ENCODE measurements at regions of chr10 and their contacts with region 1.

Region 1: DNA sequence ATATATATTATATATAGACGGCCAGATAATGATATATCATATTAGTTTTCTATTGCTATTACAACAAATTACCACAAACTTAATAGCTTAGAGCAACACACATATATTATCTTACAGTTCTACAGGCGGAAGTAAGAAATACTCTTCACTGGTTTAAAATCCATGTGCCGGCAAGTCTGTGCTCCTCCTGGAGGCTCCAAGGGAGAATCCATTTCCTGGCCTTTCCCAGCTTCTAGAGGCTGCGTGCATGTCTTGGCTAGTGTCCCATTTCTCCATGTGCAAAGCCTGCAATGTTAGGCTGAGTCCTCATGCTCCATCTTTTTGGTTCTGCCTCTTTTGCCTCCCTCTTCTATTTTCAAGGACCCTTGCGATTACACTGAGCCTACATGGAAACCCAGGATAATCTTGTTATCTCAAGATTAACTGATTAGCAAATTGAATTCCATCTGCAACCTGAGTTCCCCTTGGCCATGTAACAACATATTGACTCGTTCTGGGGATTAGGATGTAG is 23.9 kb upstream of the PNLIPRP3 start:
- DNase-seq: no peak
- H3K4me3 ChIP-seq: no peak overlapping the region
- H3K27ac ChIP-seq: no peak overlapping the region
- H3K4me1 ChIP-seq: no peaks in the 10 kb centered on the region
- H3K27me3 ChIP-seq: no peaks in the 10 kb centered on the region
- CTCF ChIP-seq: no peak
- EP300 ChIP-seq: no peak
- POLR2A ChIP-seq: no peak

Region 2: GRCh38 chr10:116444527-116445142 is 40.8 kb after region 1 on chr10:
- in situ Hi-C with region 1: no loop called
- intact Hi-C with region 1: loop called (anchors 2 kb)
- DNase-seq: no peak
- H3K4me3 ChIP-seq: no peak overlapping the region
- H3K27ac ChIP-seq: no peak overlapping the region
- H3K4me1 ChIP-seq: no peaks in the 10 kb centered on the region
- H3K27me3 ChIP-seq: no peaks in the 10 kb centered on the region
- CTCF ChIP-seq: peak; percentile 45 to 75 (median 67)
- EP300 ChIP-seq: no peak
- POLR2A ChIP-seq: no peak

Region 3: DNA sequence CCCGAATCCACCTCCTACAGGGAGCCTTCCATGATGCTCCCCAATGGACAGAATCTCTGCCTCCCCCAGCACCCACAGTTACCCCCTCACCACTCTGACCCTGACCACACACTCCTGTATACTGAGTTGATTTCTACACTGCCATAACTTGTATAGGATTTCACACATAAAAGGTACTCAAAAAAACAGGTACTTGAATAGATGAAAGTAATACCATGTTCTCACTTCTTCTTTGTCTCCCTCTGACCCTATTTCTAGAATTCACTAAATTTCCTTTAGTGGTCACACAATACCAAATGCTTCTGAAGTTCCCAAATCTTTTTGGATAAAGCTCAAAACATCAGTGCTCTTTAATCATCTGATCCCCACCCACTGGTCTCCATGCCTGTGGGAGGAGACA is 293.1 kb after region 1 on chr10:
- in situ Hi-C with region 1: no loop called
- intact Hi-C with region 1: no loop called
- DNase-seq: no peak
- H3K4me3 ChIP-seq: no peak overlapping the region
- H3K27ac ChIP-seq: no peak overlapping the region
- H3K4me1 ChIP-seq: no peaks in the 10 kb centered on the region
- H3K27me3 ChIP-seq: no peaks in the 10 kb centered on the region
- CTCF ChIP-seq: no peak
- EP300 ChIP-seq: no peak
- POLR2A ChIP-seq: no peak

Measured in transverse colon (tissue), 4 donors.